OCI-LY7 (cell line): ENCODE measurements at regions of chr2 and their contacts with region 1.

Region 1: DNA sequence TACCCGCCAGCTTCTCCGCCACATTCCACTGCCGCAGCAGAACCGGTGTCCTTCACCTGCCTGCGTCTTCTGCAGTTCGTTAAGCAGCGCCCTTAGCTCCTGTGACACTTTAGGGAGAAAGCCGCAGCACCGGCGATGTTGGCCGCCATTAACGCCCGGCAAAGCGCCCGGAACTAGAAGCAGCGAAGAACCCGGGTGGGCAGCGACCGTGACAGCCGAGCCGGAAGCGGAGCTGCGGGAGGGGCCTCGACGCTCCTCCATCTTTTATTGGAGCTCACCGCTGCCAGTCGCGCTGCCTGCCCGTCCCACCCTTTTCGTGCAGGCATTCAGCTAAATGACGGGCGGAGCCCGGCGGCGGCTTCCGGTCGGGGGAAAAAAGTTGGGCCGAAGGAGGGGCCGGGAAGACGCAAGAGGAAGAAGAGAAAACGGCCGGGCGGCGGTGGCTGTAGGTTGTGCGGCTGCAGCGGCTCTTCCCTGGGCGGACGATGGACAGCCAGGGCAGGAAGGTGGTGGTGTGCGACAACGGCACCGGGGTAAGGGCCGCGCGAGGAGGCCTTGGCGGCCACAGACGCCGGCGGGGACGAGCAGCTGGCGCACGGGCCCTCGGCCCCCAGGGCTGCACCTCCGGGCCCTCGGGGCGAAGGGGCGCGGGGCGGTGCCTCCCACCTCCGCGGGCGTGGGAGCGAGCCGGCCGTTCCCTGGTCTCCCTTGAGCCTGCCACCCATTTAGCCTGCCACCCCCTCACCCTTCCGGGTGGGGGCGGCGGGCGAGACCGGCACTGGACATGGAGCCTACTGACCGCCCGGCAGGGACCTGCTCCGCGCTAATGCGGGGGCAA is at the start of gene ACTR2:
- DNase-seq: peak; percentile 98
- H3K4me3 ChIP-seq: peak within 1 kb of the TSS; percentile 99
- H3K27ac ChIP-seq: peak within 1 kb of the TSS; percentile 98
- H3K4me1 ChIP-seq: peaks cover 35% of the 10 kb centered on the region
- CTCF ChIP-seq: no peak
- total RNA-seq, gene ACTR2: 69.0 and 79.6 TPM in 2 replicates

Region 2: GRCh38 chr2:65070172-65070830 is 157.3 kb before region 1 on chr2:
- CTCF ChIA-PET with region 1: no interaction called
- POLR2A ChIA-PET with region 1: interaction called, 6 read pairs
- intact Hi-C with region 1: loop called (anchors 5 kb)
- DNase-seq: peak; percentile 76
- H3K4me3 ChIP-seq: peak overlapping the region; percentile 15
- H3K27ac ChIP-seq: peak overlapping the region; percentile 83
- H3K4me1 ChIP-seq: peaks cover 78% of the 10 kb centered on the region
- CTCF ChIP-seq: 0 out of 2 replicates have a peak, but pooled peaks have one; percentile 28

Region 3: GRCh38 chr2:65204461-65205210 is 23.0 kb before region 1 on chr2:
- CTCF ChIA-PET with region 1: no interaction called
- POLR2A ChIA-PET with region 1: interaction called, 10 read pairs
- intact Hi-C with region 1: loop called (anchors 1 kb)
- DNase-seq: peak; percentile 50
- H3K4me3 ChIP-seq: no peak overlapping the region
- H3K27ac ChIP-seq: no peak overlapping the region
- H3K4me1 ChIP-seq: peaks cover 23% of the 10 kb centered on the region
- CTCF ChIP-seq: no peak

Region 4: DNA sequence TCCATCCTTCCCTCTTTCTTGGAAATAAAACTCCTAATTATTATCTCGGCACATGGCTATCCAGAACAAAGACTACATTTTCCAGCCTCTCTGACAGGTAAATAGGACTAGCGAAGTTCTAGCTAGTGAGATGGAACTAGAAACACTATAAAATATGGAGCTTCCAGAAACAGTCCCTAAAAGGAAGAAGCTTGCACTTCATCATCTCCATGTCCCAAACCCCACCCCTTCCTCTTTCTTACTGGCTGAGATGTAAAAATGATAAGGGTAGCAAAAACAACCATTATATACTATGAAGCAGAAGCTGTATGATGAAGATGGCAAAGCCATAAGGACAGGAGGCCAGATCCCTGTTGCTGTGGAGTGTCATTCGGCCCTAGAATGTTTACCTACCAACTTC is 11.7 kb before region 1 on chr2:
- CTCF ChIA-PET with region 1: no interaction called
- POLR2A ChIA-PET with region 1: interaction called, 37 read pairs
- intact Hi-C with region 1: no loop called
- DNase-seq: no peak
- H3K4me3 ChIP-seq: no peak overlapping the region
- H3K27ac ChIP-seq: no peak overlapping the region
- H3K4me1 ChIP-seq: peaks cover 10% of the 10 kb centered on the region
- CTCF ChIP-seq: no peak